Activated CD8-positive, alpha-beta T cell treated with anti-CD3 and anti-CD28 coated beads for 36 hours (primary cell): ENCODE measurements at regions of chr1 and their contacts with region 1.

Region 1: DNA sequence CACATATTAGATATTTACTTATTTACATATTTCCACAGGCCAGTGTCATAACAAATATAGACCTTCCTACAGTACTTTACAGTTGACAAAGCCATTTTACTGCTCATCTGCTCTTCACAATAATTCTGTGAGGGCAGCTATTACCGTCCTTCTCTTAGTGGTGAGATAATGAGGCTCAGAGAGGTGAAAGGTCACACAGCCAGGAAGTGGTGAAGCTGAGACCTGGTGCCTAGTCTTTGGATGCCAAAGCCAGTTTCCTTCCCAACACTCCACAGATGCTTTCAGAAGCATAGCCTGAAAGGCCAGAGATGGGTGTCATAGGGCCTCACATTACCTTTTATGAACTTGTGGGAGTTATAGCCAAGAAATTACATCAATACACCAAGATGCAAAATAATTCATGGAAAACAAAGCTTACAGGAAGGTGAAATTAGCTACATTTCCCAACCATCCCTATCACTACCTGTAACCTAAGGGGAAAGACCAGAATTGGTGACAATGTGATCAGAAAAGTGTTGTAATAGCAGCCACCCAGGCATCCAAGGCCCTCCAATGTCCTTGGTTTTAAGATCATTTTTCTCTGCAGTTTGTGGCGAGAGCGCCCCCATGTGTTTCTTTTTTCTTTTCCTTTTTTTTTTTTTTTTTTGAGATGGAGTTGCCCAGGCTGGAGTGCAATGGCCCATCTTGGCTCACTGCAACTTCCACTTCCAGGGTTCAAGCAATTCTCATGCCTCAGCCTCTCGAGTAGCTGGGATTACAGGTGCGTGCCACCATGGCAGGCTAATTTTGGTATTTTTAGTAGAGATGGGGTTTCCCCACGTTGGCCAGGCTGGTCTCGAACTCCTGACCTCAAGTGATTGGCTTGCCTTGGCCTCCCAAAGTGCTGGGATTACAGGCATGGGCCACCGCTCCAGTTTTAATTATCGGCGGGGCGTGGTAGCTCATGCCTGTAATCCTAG is 26.5 kb upstream of the RPL11 start:
- DNase-seq: peak; percentile 54
- ATAC-seq: peak; percentile 74
- H3K4me3 Mint-ChIP-seq: no peak overlapping the region
- H3K27ac Mint-ChIP-seq: no peak overlapping the region
- H3K4me1 Mint-ChIP-seq: peaks cover 6% of the 10 kb centered on the region
- H3K27me3 Mint-ChIP-seq: no peaks in the 10 kb centered on the region
- CTCF ChIP-seq: peak; percentile 63

Region 2: GRCh38 chr1:23601071-23601967 is 63.8 kb before region 1 on chr1:
- CTCF ChIA-PET with region 1: no interaction called
- POLR2A ChIA-PET with region 1: no interaction called
- intact Hi-C with region 1: no loop called
- DNase-seq: no peak
- ATAC-seq: peak; percentile 18
- H3K4me3 Mint-ChIP-seq: peak overlapping the region; percentile 57
- H3K27ac Mint-ChIP-seq: peak overlapping the region; percentile 75
- H3K4me1 Mint-ChIP-seq: peaks cover 77% of the 10 kb centered on the region
- H3K27me3 Mint-ChIP-seq: no peaks in the 10 kb centered on the region
- CTCF ChIP-seq: no peak

Region 3: GRCh38 chr1:23691499-23692307 is 26.6 kb after region 1 on chr1 and contains the start of gene RPL11:
- CTCF ChIA-PET with region 1: interaction called, 13 read pairs
- POLR2A ChIA-PET with region 1: interaction called, 5 read pairs
- intact Hi-C with region 1: no loop called
- DNase-seq: peak; percentile 92
- ATAC-seq: peak; percentile 99
- H3K4me3 Mint-ChIP-seq: peak within 1 kb of the TSS; percentile 95
- H3K27ac Mint-ChIP-seq: peak within 1 kb of the TSS; percentile 98
- H3K4me1 Mint-ChIP-seq: peaks cover 42% of the 10 kb centered on the region
- H3K27me3 Mint-ChIP-seq: no peaks in the 10 kb centered on the region
- CTCF ChIP-seq: peak; percentile 76
- total RNA-seq, gene RPL11: 1,493 to 1,569 TPM

Region 4: GRCh38 chr1:23838401-23838866 is 173.3 kb after region 1 on chr1:
- CTCF ChIA-PET with region 1: no interaction called
- POLR2A ChIA-PET with region 1: no interaction called
- intact Hi-C with region 1: no loop called
- DNase-seq: peak; percentile 84
- ATAC-seq: peak; percentile 100
- H3K4me3 Mint-ChIP-seq: peak overlapping the region; percentile 65
- H3K27ac Mint-ChIP-seq: no peak overlapping the region
- H3K4me1 Mint-ChIP-seq: peaks cover 12% of the 10 kb centered on the region
- H3K27me3 Mint-ChIP-seq: peaks cover 3% of the 10 kb centered on the region
- CTCF ChIP-seq: no peak